Activated T-helper 1 cell treated with anti-CD3 and anti-CD28 coated beads, Interleukin-12 subunit alpha, Interleukin-12 subunit beta, Interleukin-2, Interleukin-4 antibody, amounts not matched to agents 30 ng/mL and 10 ng/mL and 1 ng/mL, durations not matched to agents 14 hours and 24 hours and 36 hours (primary cell): ENCODE measurements at regions of chr2 and their contacts with region 1.

Region 1: DNA sequence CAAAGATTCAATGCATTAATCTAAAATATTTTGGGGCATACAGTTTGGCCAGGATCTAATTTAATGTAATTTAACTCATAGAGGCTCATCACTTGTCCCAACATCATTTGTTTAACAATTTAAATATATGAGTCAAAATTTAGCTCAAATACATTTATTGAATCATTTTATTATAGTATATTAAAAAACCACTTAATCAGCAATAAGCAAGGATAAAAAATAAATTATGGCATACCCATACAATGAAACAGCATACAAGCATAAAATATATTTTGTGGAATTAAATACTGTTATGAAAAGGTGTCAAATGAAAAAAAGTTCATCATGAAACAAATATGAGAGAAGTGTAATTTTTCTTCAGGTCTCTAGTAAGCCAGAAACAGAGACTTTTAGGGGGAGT is 34.9 kb downstream of the LRPPRC start:
- DNase-seq: no peak
- H3K4me3 Mint-ChIP-seq: no peak overlapping the region
- H3K27ac Mint-ChIP-seq: no peak overlapping the region
- H3K4me1 Mint-ChIP-seq: no peaks in the 10 kb centered on the region
- H3K27me3 Mint-ChIP-seq: no peaks in the 10 kb centered on the region

Region 2: GRCh38 chr2:43905371-43905803 is 55.5 kb before region 1 on chr2:
- intact Hi-C with region 1: loop called (anchors 5 kb)
- DNase-seq: no peak
- H3K4me3 Mint-ChIP-seq: no peak overlapping the region
- H3K27ac Mint-ChIP-seq: no peak overlapping the region
- H3K4me1 Mint-ChIP-seq: peaks cover 5% of the 10 kb centered on the region
- H3K27me3 Mint-ChIP-seq: no peaks in the 10 kb centered on the region

Region 3: GRCh38 chr2:43985359-43985758 is 24.4 kb after region 1 on chr2:
- intact Hi-C with region 1: no loop called
- DNase-seq: no peak
- H3K4me3 Mint-ChIP-seq: no peak overlapping the region
- H3K27ac Mint-ChIP-seq: peak overlapping the region; percentile 3
- H3K4me1 Mint-ChIP-seq: peaks cover 19% of the 10 kb centered on the region
- H3K27me3 Mint-ChIP-seq: no peaks in the 10 kb centered on the region